ENCODE measurements at regions of chr5 and their contacts with region 1.

Region 1: DNA sequence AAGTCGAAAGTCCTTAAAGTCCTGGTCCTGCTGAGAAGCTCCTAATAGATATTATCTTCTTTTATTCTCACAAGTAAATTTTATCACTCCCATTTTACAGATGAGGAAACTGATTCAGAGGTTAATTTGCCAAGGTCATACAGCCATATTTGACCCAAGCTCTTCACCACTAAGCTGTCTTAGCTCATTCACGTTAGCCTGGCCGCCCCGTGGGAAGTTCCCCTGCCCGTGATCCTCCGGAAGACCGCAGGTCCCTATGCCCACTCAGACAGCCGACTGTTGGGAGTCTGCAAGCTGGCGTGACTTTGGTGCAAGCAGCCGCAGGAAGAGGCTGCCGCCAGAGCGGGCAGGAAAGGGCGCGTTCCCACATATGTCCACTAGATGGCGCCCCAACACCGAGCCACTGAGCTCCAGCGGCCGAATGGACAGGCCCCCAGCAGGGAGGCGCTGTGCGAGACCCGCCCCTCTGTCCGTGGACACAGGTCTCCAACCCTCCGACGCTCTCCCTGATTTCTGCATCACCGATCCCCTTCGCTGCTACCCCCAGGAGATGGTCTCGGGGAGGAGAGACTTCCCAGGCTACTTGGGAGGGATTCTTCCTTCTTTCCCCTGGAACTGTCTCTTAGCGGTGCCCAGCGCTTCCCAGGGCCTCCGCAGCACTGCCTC is 10.0 kb upstream of the ARAP3 start:
- DNase-seq: peak; percentile 83
- H3K4me3 Mint-ChIP-seq: peak overlapping the region; percentile 75
- H3K27ac Mint-ChIP-seq: peak overlapping the region; percentile 69
- H3K4me1 Mint-ChIP-seq: peaks cover 34% of the 10 kb centered on the region
- H3K27me3 Mint-ChIP-seq: peaks cover 12% of the 10 kb centered on the region

Region 2: GRCh38 chr5:141077826-141078225 is 614.2 kb before region 1 on chr5:
- intact Hi-C with region 1: no loop called
- DNase-seq: no peak
- H3K4me3 Mint-ChIP-seq: no peak overlapping the region
- H3K27ac Mint-ChIP-seq: no peak overlapping the region
- H3K4me1 Mint-ChIP-seq: no peaks in the 10 kb centered on the region
- H3K27me3 Mint-ChIP-seq: no peaks in the 10 kb centered on the region

Region 3: DNA sequence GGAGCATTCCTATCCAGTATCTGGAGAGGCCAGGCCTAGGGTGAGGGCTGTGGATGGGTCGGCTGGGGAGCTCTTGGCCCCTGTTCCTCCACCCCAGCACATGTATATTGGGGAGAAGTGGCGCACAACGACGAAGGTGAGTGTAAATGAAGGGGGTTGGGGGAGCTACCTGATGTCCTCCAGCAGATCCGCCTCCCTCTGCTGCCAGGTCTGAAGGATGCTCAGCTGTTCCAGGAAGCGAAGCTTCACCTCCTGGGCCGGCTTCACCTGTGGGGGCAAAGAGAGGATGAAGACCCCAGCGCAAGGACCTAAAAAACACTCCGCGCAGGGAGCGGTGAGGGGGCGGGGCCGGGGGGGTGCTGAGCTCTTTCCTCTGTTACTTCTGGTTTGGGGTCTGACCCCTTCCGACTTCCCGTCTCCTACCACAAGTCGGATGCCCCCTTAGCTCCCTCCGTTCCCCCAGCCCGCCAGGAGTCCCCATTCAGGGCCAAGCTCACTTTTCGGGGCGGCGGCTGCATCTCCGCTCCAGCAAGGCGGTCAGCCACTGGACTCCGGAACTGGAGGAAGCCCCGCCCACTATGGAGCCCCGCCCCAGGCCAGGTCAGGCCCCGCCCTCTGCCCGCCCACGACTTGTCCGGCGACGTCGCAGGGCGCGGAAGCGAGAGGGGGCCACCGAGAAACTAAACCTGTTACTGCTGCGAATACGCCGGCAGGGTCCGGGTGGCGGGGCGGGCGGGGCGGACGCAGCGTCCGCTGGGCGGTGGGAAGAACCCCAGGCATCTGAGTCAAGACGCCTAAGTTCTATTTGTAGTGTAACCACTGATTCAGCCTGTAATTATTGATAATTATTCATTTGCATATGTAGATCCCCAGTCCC is 40.9 kb before region 1 on chr5 and contains the start of gene FCHSD1:
- intact Hi-C with region 1: no loop called
- DNase-seq: peak; percentile 76
- H3K4me3 Mint-ChIP-seq: peak within 1 kb of the TSS; percentile 98
- H3K27ac Mint-ChIP-seq: peak within 1 kb of the TSS; percentile 92
- H3K4me1 Mint-ChIP-seq: peaks cover 43% of the 10 kb centered on the region
- H3K27me3 Mint-ChIP-seq: no peaks in the 10 kb centered on the region
- total RNA-seq, gene FCHSD1: 37.0 and 37.1 TPM in 2 replicates

Region 4: DNA sequence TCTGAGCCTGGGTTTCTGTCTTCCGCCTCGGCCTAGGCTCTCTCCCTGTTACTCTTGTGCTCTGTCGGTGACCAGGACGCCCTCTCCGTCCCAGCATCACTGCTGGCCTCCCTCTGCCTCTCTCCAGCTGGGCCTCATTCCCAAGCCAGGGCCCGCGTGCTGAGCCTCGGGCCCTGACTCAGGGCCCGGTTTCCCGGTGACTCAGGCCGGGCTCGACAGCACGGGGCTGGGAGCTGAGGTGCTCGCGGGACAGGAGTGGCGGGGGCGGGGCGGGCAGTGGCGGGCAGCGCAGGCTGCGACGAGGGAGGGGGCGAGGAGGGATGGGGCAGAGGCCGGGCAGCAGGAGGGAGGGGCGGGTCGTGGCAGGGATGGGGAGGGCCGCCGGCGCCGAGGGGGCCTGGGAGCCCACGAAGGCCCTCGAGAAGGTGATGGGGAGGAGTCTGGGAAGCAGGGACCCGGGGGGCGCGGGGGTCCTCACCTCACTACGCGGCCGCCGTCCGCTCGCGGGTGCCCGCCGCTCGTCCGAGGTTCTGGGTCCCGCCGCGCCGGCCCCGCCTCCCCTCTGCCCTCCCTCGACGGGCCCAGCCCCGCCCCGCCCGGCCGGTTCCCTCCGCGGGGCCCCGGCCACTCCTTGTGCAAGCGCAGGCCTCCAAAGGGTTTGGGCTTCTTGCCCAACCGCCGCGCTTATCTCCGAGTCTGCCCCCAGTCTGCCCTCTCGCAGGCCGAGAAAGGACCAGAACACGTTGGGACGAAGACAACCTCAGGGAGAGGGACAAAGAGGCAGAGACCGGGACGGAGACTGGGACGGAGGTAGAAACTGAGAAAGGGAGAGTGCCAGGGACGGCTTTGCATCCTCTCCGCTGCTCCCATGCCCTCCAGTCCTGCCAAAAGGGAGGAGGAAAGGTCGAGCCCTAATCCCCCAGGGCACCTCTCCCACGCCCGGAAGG is 10.0 kb before region 1 on chr5 and contains the start of gene ARAP3:
- intact Hi-C with region 1: loop called (anchors 1 kb)
- DNase-seq: peak; percentile 22
- H3K4me3 Mint-ChIP-seq: peak within 1 kb of the TSS; percentile 72
- H3K27ac Mint-ChIP-seq: peak within 1 kb of the TSS; percentile 71
- H3K4me1 Mint-ChIP-seq: peaks cover 23% of the 10 kb centered on the region
- H3K27me3 Mint-ChIP-seq: peaks cover 1% of the 10 kb centered on the region
- total RNA-seq, gene ARAP3: 7.1 and 7.2 TPM in 2 replicates

Region 5: GRCh38 chr5:141778206-141778605 is 86.2 kb after region 1 on chr5:
- intact Hi-C with region 1: no loop called
- DNase-seq: no peak
- H3K4me3 Mint-ChIP-seq: no peak overlapping the region
- H3K27ac Mint-ChIP-seq: no peak overlapping the region
- H3K4me1 Mint-ChIP-seq: peaks cover 5% of the 10 kb centered on the region
- H3K27me3 Mint-ChIP-seq: peaks cover 7% of the 10 kb centered on the region

Region 6: GRCh38 chr5:141878711-141879425 is 186.9 kb after region 1 on chr5:
- intact Hi-C with region 1: loop called (anchors 1 kb)
- DNase-seq: peak; percentile 81
- H3K4me3 Mint-ChIP-seq: peak overlapping the region; percentile 76
- H3K27ac Mint-ChIP-seq: peak overlapping the region; percentile 37
- H3K4me1 Mint-ChIP-seq: peaks cover 25% of the 10 kb centered on the region
- H3K27me3 Mint-ChIP-seq: peaks cover 80% of the 10 kb centered on the region

Region 7: DNA sequence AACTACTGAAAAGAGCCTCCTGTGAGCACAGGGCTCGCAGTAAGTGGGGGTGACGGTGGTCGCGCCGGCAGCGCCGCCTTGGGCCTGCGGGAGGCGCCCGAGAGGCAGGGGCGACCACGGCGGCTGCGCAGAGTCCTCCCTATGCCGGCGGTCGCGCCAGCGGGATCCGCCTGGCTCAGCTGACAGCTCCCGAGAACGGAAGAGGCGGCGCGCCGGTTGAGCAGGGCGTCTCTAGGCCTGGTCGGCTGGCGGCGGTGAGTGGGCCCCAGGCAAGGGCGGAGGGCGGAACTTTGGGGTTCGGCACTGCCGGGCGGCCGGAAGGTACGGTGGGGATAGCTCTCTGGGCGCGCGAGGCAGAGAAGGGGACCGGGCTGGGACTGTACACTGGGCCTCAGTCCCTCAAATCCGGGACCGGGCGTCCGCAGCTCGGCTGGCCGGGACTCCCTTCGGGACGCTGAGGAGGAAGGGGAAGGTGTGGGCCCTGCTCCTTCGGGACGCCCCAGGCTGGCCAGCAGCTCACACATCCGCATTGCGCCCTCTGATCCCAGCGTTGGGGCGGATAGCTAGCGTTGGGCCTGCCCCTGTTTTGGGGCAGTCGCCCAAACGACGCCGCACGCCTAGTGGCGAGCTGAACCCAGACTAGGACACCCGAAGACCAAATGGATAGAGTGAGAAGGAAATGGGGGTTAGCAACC is 277.1 kb after region 1 on chr5 and contains the start of gene RNF14:
- intact Hi-C with region 1: loop called (anchors 2 kb)
- DNase-seq: peak; percentile 95
- H3K4me3 Mint-ChIP-seq: peak within 1 kb of the TSS; percentile 92
- H3K27ac Mint-ChIP-seq: peak within 1 kb of the TSS; percentile 93
- H3K4me1 Mint-ChIP-seq: peaks cover 26% of the 10 kb centered on the region
- H3K27me3 Mint-ChIP-seq: no peaks in the 10 kb centered on the region
- total RNA-seq, gene RNF14: 26.4 and 28.7 TPM in 2 replicates

Region 8: GRCh38 chr5:142108432-142109330 is 416.7 kb after region 1 on chr5 and contains the start of gene NDFIP1:
- intact Hi-C with region 1: loop called (anchors 5 kb)
- DNase-seq: peak; percentile 85
- H3K4me3 Mint-ChIP-seq: peak within 1 kb of the TSS; percentile 97
- H3K27ac Mint-ChIP-seq: peak within 1 kb of the TSS; percentile 100
- H3K4me1 Mint-ChIP-seq: peaks cover 80% of the 10 kb centered on the region
- H3K27me3 Mint-ChIP-seq: no peaks in the 10 kb centered on the region
- total RNA-seq, gene NDFIP1: 119 and 129 TPM in 2 replicates

Region 9: GRCh38 chr5:142699184-142699720 is 1007.3 kb after region 1 on chr5:
- intact Hi-C with region 1: loop called (anchors 2 kb)
- DNase-seq: peak; percentile 56
- H3K4me3 Mint-ChIP-seq: no peak overlapping the region
- H3K27ac Mint-ChIP-seq: no peak overlapping the region
- H3K4me1 Mint-ChIP-seq: no peaks in the 10 kb centered on the region
- H3K27me3 Mint-ChIP-seq: peaks cover 13% of the 10 kb centered on the region

Measured in activated T-helper 1 cell treated with anti-CD3 and anti-CD28 coated beads, Interleukin-12 subunit alpha, Interleukin-12 subunit beta, Interleukin-2, Interleukin-4 antibody, amounts not matched to agents 30 ng/mL and 10 ng/mL and 1 ng/mL, durations not matched to agents 14 hours and 24 hours and 36 hours (primary cell).